ENCODE measurements at regions of chr15 and their contacts with region 1.

Region 1: GRCh38 chr15:83526319-83526718 is 79.2 kb downstream of the SH3GL3 start:
- DNase-seq: no peak
- ATAC-seq: no peak
- H3K4me3 ChIP-seq: no peak overlapping the region
- H3K27ac ChIP-seq: no peak overlapping the region
- H3K4me1 ChIP-seq: no peaks in the 10 kb centered on the region
- H3K27me3 ChIP-seq: no peaks in the 10 kb centered on the region

Region 2: GRCh38 chr15:83462953-83463433 is 63.3 kb before region 1 on chr15:
- intact Hi-C with region 1: loop called in 1 of 2 experiments (anchors 10 kb)
- DNase-seq: no peak
- ATAC-seq: no peak
- H3K4me3 ChIP-seq: no peak overlapping the region
- H3K27ac ChIP-seq: no peak overlapping the region
- H3K4me1 ChIP-seq: no peaks in the 10 kb centered on the region
- H3K27me3 ChIP-seq: no peaks in the 10 kb centered on the region

Region 3: DNA sequence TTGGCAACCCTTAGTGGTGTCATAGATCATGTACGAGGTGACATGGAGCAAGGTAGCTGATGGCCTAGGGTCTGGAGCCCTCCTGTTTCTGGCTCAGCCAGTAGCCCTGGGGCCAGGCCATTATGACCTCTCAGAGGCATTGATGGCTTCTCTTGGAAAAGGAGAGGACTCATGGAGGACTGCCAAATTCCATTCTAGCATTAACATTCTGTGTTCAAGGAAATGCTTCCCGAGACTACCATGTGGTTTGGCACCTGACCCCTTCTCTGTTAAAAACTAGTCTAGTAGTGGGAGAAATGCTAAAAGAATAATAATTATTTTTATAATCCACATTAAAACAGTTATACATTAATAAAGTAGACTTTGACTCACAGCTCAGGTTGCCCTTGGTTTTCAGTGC is 87.4 kb after region 1 on chr15:
- intact Hi-C with region 1: no loop called
- DNase-seq: no peak
- ATAC-seq: no peak
- H3K4me3 ChIP-seq: no peak overlapping the region
- H3K27ac ChIP-seq: no peak overlapping the region
- H3K4me1 ChIP-seq: no peaks in the 10 kb centered on the region
- H3K27me3 ChIP-seq: no peaks in the 10 kb centered on the region